Common myeloid progenitor, CD34-positive (primary cell): ENCODE measurements at regions of chr6 and their contacts with region 1.

Region 1: DNA sequence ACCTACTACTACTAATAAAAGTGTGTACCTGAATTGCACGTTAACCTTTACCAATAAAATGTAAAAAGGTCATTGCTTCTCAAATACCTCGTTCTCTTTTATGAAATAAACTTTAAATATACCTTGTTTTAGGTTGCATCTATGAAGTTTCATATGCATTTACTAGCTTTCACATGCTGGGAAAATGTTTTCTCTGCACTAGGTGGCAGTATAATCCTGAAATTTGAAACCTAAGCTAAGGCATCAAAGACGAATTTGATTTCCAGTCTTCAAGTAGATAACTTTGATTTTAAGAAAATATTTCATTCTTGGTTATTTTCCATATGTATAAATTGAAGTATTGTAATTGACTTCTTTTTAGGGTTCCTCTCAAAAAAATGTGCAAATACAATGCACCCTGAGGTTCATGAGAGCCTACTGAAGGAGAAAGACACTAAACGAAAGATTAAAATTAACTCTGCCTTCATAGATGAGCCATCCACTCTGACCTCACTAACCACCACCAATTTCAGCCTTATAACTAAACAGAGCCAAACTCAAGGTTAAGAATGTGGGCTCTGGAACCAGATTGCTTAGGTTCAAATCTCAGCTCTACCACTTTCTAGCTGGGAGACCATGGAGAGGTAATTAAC is 7.3 kb upstream of the COL9A1 start:
- DNase-seq: peak; percentile 39 to 70 (median 54)
- H3K4me3 ChIP-seq: no peak overlapping the region
- H3K27ac ChIP-seq: no peak overlapping the region
- H3K4me1 ChIP-seq: peaks cover 0 to 2% (median 0%) of the 10 kb centered on the region in 4 experiments
- H3K27me3 ChIP-seq: peaks cover 0 to 14% (median 3%) of the 10 kb centered on the region in 5 experiments

Region 2: DNA sequence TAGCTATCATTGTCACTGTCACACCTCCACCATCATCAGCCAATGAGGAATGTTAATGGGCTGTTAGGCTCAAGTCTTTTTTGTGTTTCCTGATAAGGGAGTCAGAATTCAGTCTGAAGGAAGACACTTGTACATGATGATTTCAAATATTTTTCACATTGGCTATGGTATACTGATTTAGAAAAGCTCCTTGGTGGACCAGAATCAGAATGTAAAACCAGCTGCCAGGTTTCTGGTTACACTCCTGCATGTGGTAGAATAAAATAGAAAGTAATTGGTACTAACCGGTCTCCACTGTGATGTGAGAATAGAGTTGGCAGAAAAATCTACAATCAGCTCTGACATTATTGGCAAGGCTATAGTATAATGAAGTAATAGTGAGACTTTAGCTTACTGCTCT is 18.0 kb before region 1 on chr6:
- CTCF ChIA-PET with region 1: interaction called, 19 read pairs
- POLR2A ChIA-PET with region 1: no interaction called
- DNase-seq: no peak
- H3K4me3 ChIP-seq: no peak overlapping the region
- H3K27ac ChIP-seq: no peak overlapping the region
- H3K4me1 ChIP-seq: no peaks in the 10 kb centered on the region
- H3K27me3 ChIP-seq: peaks cover 0 to 10% (median 2%) of the 10 kb centered on the region in 5 experiments

Region 3: DNA sequence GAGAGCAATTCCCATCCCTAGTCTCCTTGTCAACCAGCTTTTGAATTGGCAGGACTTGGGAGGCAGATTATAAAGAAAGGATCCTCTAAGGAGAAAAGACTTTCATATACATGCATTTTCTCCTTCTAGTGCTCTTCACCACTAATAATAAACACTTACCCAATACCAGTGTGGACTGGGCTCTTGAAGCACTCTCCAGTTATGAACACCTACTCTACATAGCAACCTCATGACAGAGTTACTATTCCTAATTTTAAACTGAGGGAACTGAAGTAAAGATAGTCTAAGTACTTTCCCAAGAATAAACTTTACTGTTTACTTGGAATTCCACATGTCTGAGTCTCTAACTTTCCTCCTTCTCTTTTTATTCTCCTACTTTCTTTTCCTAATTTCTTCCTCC is 12.1 kb before region 1 on chr6:
- CTCF ChIA-PET with region 1: interaction called, 19 read pairs
- POLR2A ChIA-PET with region 1: no interaction called
- DNase-seq: no peak
- H3K4me3 ChIP-seq: no peak overlapping the region
- H3K27ac ChIP-seq: no peak overlapping the region
- H3K4me1 ChIP-seq: no peaks in the 10 kb centered on the region
- H3K27me3 ChIP-seq: peaks cover 0 to 3% (median 0%) of the 10 kb centered on the region in 5 experiments

Region 4: DNA sequence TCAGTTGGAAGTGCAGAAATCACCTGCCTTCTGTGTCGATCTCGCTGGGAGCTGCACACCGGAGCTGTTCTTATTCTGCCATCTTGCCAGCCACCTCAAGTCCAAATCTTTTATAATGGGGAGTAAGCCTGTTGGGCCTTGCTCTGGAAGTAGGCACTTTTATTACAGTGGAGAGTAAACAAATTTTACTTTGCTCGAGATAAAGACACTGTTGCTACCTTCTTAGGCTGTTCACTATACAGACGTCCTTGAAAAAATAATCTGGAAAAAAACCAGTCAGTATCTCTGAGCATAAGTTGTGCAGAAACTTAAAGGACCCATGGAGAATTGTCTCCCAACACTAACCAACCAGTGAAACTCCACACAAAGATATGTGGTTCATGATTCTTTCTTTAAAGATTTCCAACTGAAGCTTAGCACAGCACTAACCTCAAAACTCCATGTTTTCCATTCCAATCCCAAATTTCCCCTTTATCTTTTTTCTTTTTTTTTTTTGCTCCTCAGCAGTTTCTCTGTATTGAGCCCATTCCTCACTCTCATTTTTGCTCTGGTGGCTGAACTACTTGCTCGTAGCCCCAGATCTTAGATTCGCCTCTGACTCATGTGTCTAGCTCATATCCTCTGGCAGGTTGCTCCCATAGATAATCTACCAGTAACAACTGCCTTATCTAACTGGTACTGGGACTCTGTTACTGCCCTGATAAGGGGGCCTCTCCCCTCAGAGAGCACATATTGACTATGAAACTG is 27.0 kb after region 1 on chr6:
- CTCF ChIA-PET with region 1: no interaction called
- POLR2A ChIA-PET with region 1: no interaction called
- DNase-seq: peak; percentile 45 to 74 (median 64)
- H3K4me3 ChIP-seq: no peak overlapping the region
- H3K27ac ChIP-seq: peak overlapping the region in 1 of 2 experiments; percentile 61
- H3K4me1 ChIP-seq: no peaks in the 10 kb centered on the region
- H3K27me3 ChIP-seq: no peaks in the 10 kb centered on the region

Region 5: DNA sequence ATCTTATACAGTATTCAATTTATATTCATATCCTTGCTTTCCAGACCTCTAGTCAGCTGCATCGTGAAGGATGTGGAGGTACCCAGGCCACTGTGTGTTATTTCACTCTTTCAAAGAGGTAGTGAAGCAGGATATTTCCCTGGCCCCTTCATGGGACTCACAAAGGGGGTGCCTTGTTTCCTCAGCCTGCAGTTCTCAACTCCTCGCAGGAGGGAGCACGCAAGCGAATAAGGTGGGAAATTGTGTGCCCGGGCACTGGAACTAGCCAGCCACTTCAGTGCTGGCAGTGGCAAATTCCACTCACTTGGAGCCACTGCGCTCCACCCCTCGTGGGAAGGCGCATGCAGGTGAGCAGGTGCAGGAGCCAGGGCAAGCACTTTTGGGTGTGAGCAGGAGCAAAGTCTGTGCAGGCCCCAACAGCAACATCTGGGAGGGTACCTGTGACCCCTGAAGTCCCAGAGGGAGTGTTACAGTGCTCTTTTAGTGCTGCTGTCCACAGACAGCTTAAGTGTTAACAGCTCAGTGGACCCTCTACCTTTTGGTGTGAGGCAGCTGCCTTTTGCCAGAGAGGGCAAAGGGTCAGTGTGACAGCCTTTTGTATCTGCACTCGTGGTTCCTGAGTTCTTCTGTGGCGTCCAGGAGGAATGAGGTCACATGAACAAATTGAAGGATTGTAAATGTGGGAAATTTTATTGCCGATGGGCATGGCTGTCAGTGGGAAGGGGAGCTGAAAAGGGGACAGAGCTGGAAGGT is 53.7 kb after region 1 on chr6:
- CTCF ChIA-PET with region 1: interaction called, 45 read pairs
- POLR2A ChIA-PET with region 1: no interaction called
- DNase-seq: no peak
- H3K4me3 ChIP-seq: no peak overlapping the region
- H3K27ac ChIP-seq: no peak overlapping the region
- H3K4me1 ChIP-seq: no peaks in the 10 kb centered on the region
- H3K27me3 ChIP-seq: peaks cover 0 to 8% (median 3%) of the 10 kb centered on the region in 5 experiments

Region 6: DNA sequence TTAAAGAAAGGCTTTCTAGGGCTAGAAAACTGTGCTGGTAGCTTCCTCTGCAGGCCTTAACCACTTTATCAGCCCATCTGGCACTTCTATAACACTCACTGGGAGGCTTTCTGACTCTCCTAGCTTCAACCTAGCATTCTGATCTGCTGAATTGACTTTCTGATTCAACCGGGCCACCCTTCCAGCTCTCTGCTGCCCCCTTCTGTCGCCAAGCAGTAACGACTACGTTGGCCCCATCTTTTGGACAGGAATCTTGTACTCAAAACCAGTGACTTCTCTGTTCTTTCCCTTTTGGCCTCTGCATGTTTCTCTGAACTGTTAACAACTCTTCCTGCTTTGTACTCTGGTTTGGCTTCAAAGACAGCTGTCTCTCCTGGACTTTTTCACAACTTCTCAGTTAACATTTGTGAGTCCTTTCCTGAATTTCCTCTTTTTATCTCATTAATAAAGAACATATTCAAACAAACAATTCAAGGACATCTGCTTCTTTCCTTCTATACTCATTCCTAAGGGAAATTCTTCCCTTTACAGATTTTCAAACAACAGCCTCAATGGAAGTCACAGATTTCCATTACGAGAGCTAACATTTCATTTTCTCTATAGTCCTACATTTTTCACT is 59.3 kb after region 1 on chr6:
- CTCF ChIA-PET with region 1: interaction called, 45 read pairs
- POLR2A ChIA-PET with region 1: no interaction called
- DNase-seq: peak; percentile 61 to 84 (median 77)
- H3K4me3 ChIP-seq: no peak overlapping the region
- H3K27ac ChIP-seq: no peak overlapping the region
- H3K4me1 ChIP-seq: no peaks in the 10 kb centered on the region
- H3K27me3 ChIP-seq: peaks cover 0 to 8% (median 2%) of the 10 kb centered on the region in 5 experiments

Region 7: GRCh38 chr6:71012866-71013469 is 702.8 kb after region 1 on chr6:
- CTCF ChIA-PET with region 1: interaction called, 29 read pairs
- POLR2A ChIA-PET with region 1: no interaction called
- DNase-seq: peak; percentile 50 to 78 (median 72)
- H3K4me3 ChIP-seq: no peak overlapping the region
- H3K27ac ChIP-seq: no peak overlapping the region
- H3K4me1 ChIP-seq: peaks cover 0 to 3% (median 0%) of the 10 kb centered on the region in 4 experiments
- H3K27me3 ChIP-seq: no peaks in the 10 kb centered on the region